Gastrocnemius medialis (tissue), 4 donors: ENCODE measurements at regions of chr9 and their contacts with region 1.

Region 1: DNA sequence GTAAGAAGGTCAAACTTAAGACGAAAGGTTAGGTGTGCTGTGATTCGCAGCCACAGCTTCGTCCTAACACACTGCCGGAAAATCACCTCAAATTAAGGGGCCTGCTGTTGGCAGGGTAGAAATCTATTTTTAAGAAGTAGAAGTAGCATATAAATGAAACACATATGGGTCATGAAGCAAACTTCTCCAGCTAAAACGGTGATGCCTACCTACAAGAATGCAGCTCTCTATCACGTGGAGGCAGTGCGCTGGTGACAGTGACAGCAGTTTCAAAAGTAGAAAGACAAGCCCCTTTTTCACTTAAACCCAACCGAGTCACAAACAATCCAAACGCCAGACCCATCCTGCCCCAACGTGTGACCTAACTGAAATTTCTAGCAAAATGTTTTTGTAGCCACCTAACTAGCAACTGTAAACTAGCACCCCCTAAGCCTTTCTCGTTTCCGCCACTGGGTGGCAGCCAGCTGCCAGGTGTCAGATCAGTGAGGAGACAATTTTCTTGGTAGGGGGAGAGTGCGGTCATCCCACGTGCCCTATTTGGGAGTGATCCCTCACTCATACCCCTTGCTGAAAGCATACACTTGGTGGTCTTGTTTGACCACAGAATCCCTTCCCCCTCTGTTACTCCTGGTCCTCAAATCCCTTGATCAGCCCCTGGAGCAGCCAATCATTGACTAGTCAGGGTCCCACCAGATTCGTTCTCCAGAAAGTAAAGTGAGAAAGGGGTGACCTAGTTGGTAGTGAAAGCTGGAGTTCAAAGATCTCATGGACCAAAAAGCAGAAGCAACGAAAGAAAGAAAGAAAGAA is 71.8 kb upstream of the MAMDC2 start:
- DNase-seq: peak; percentile 35 to 59
- ATAC-seq: peak in 1 of 2 donors; percentile 46
- H3K4me3 ChIP-seq: no peak overlapping the region
- H3K27ac ChIP-seq: no peak overlapping the region
- H3K4me1 ChIP-seq: peaks cover 0 to 3% of the 10 kb centered on the region in 2 donors
- H3K27me3 ChIP-seq: no peaks in the 10 kb centered on the region
- CTCF ChIP-seq: peak; percentile 60 to 80 (median 79)
- POLR2A ChIP-seq: no peak

Region 2: DNA sequence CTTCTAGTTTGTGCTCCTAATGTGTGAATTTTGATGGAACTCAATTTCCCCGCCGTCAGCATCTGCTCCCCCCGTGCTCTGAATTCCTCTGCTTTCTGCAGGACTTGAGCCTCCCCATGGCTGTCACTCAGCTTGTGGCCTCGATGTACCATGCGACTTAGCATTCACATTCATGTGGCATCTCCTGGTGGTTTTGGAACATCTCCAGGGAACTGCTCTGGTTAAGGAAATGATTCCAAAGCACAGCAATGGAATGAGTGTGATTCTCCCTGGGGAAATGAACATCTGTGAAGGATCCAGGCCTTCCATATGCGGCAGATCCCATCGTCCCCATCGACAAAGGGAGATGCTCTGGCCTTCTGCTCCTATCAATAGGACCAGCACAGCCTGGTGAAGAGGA is 527.8 kb before region 1 on chr9:
- in situ Hi-C with region 1: no loop called
- intact Hi-C with region 1: no loop called
- DNase-seq: no peak
- ATAC-seq: no peak
- H3K4me3 ChIP-seq: no peak overlapping the region
- H3K27ac ChIP-seq: no peak overlapping the region
- H3K4me1 ChIP-seq: peaks cover 9 to 11% of the 10 kb centered on the region in 2 donors
- H3K27me3 ChIP-seq: no peaks in the 10 kb centered on the region
- CTCF ChIP-seq: no peak
- POLR2A ChIP-seq: no peak

Region 3: DNA sequence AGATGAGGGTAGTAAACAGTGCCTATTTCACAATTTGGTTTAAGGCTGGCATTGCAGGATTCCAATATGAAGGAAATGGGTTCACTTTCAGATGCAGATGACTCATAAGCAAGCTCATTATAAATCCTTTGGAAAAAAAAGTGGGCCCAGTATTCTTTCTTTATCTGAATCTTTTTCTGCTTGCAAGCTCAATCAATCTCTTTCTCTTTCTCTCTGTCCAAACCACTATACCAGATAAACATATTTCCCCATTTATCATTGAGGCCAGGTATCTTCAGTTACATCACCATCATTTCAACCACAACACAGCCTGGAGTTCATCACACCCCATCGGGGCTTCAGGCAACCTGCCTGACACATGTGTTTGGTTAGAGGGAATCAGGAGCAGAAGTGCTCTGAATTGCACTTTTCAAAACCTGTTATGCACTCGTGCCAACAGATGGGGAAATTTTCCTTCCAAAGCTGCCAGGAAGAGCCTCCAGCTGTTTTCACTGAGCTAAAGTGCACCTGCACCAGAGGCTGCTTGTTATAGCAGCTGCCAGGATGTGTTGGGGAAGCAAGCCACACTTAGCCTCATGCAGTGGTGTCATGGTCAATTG is 41.9 kb after region 1 on chr9:
- in situ Hi-C with region 1: no loop called
- intact Hi-C with region 1: no loop called
- DNase-seq: peak; percentile 15 to 72
- ATAC-seq: peak; percentile 61 to 82
- H3K4me3 ChIP-seq: no peak overlapping the region
- H3K27ac ChIP-seq: peak overlapping the region in 1 of 4 donors; percentile 50
- H3K4me1 ChIP-seq: peaks cover 0 to 3% of the 10 kb centered on the region in 2 donors
- H3K27me3 ChIP-seq: no peaks in the 10 kb centered on the region
- CTCF ChIP-seq: no peak
- POLR2A ChIP-seq: no peak

Region 4: DNA sequence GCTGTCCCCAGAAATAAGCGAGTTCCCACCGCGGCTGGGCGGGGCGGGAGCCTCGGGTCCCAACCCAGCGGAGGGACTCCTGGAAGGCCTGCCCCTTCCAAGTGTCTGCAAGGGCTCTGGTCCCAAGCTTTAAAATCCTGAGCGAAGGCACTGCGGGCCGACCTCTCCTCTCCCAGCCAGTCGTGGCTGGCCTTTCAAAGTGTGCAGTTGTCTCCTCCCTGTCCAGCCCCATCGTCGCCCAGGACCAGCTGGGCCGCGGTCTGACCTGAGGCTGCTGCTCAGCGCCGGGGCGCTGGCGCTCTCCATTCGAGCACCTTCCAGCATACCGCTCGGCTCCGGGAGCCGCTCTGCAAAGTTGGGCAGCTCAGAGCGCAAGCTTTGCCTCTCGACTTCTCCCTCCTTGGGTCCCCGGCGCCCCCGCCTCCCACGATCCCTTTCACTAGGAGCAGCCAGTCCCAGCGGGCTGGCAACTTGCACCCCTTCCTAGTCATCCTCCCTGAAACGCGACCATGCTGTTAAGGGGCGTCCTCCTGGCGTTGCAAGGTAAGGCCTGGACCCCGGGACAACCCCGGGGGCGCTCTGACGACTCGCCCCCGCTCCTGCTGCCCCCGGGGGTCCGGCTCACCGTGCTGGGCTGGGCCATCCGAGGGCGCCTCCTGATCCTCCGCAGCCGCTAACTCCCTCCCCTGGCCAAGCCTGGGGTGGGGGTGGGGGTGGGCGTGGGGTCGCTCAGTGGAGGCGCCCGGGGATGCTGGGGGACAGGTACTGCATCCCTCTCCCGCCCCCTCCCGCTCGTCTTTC is 72.0 kb after region 1 on chr9 and contains the start of gene MAMDC2:
- in situ Hi-C with region 1: no loop called
- intact Hi-C with region 1: loop called (anchors 10 kb)
- DNase-seq: peak; percentile 40 to 47
- ATAC-seq: peak; percentile 53 to 68
- H3K4me3 ChIP-seq: peak within 1 kb of the TSS; percentile 56 to 80 (median 64)
- H3K27ac ChIP-seq: peak within 1 kb of the TSS; percentile 66 to 75 (median 70)
- H3K4me1 ChIP-seq: peaks cover 7 to 24% of the 10 kb centered on the region in 2 donors
- H3K27me3 ChIP-seq: no peaks in the 10 kb centered on the region
- CTCF ChIP-seq: no peak
- POLR2A ChIP-seq: peak; percentile 15 to 47
- total RNA-seq, gene MAMDC2: 4.9 to 9.9 (median 8.7) TPM

Region 5: GRCh38 chr9:70100362-70100761 is 128.5 kb after region 1 on chr9:
- in situ Hi-C with region 1: loop called in 1 of 4 experiments (anchors 10 kb)
- intact Hi-C with region 1: no loop called
- DNase-seq: no peak
- ATAC-seq: no peak
- H3K4me3 ChIP-seq: no peak overlapping the region
- H3K27ac ChIP-seq: no peak overlapping the region
- H3K4me1 ChIP-seq: no peaks in the 10 kb centered on the region
- H3K27me3 ChIP-seq: no peaks in the 10 kb centered on the region
- CTCF ChIP-seq: no peak
- POLR2A ChIP-seq: no peak

Region 6: DNA sequence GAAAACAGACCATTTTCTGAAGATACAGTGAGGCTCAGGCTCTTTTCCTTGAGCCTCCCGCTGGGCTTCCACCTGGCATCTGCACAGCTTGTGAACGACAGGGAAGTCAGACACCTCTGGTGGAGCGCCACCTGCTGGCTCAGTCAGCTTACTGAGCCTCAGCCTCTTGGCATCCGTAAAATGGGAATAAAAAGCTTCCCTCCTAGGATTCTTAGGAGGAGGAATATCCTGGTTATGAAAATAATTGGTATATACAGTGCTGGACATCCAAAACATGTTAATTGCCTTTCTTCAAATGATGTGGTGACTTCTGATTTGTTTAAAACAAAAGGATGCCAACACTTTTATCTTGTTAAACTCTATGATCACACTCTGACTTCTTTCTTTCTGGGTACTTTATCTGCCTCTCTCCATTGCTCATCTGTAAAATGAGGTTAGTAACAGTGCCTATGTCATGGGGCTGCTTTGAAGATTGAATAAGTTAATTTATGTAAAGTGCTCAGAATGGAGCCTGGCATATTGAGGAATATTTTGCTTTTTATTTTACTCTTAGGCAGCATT is 139.3 kb after region 1 on chr9:
- in situ Hi-C with region 1: loop called (anchors 5 to 10 kb)
- intact Hi-C with region 1: loop called (anchors 1 kb)
- DNase-seq: peak; percentile 57 to 68
- ATAC-seq: peak; percentile 74 to 90
- H3K4me3 ChIP-seq: no peak overlapping the region
- H3K27ac ChIP-seq: peak overlapping the region in 1 of 4 donors; percentile 0
- H3K4me1 ChIP-seq: peaks cover 0 to 10% of the 10 kb centered on the region in 2 donors
- H3K27me3 ChIP-seq: no peaks in the 10 kb centered on the region
- CTCF ChIP-seq: peak; percentile 52 to 82 (median 78)
- POLR2A ChIP-seq: no peak

Region 7: DNA sequence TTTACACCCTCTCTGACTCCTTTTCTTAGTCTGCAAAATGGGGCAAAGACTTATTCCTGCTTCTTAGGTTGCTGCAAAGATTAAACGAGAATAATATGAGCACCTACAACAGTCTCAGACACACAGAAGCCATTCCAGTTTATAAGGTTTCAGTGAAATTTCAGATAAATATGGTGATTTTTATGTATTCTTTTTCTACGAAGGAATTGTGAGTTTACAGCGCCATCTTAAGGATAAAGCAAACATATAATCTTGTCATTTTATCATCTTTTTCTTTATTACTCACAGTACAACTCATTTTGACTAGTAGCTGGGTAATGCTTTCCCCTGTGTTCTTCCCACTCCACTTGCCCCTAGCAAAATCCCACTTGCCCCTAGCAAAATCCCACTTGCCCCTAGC is 257.7 kb after region 1 on chr9:
- in situ Hi-C with region 1: loop called in 2 of 4 experiments (anchors 10 to 25 kb)
- intact Hi-C with region 1: loop called (anchors 1 kb)
- DNase-seq: no peak
- ATAC-seq: no peak
- H3K4me3 ChIP-seq: no peak overlapping the region
- H3K27ac ChIP-seq: peak overlapping the region in 1 of 4 donors; percentile 39
- H3K4me1 ChIP-seq: peaks cover 16 to 17% of the 10 kb centered on the region in 2 donors
- H3K27me3 ChIP-seq: no peaks in the 10 kb centered on the region
- CTCF ChIP-seq: peak in 3 of 5 experiments; percentile 25 to 28 (median 28)
- POLR2A ChIP-seq: no peak